Activated naive CD4-positive, alpha-beta T cell treated with anti-CD3 and anti-CD28 coated beads for 36 hours (primary cell): ENCODE measurements at regions of chr4 and their contacts with region 1.

Region 1: DNA sequence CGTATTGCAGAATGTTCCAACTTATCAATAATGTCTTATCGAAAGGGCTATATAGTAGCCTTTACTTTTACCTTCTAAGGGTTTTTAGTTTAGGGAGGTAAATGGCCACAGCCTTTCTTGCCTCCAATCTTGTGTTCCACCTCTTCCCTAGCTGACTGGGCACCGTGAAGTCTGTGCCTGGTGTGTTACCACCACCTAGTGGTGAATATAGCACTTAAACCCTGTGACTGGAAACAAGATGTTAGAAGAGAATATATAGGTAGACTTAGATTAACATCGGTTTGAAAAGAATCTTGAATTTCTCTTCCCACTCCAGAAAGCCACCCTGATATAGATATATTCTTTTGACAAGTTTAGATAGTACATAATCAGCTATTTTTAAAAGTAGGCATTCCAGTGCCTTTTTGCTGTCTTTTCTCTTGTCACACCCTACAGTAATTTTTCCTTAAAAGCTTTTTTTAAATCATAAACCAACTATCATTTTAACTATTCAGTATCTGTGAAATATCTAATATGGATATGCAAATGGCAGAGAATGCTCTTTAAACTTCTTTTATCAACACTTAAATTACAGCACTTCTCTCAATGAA is 27.8 kb upstream of the ADH7 start:
- DNase-seq: peak; percentile 70
- H3K4me3 Mint-ChIP-seq: no peak overlapping the region
- H3K27ac Mint-ChIP-seq: no peak overlapping the region
- H3K4me1 Mint-ChIP-seq: no peaks in the 10 kb centered on the region
- H3K27me3 Mint-ChIP-seq: peaks cover 6% of the 10 kb centered on the region

Region 2: DNA sequence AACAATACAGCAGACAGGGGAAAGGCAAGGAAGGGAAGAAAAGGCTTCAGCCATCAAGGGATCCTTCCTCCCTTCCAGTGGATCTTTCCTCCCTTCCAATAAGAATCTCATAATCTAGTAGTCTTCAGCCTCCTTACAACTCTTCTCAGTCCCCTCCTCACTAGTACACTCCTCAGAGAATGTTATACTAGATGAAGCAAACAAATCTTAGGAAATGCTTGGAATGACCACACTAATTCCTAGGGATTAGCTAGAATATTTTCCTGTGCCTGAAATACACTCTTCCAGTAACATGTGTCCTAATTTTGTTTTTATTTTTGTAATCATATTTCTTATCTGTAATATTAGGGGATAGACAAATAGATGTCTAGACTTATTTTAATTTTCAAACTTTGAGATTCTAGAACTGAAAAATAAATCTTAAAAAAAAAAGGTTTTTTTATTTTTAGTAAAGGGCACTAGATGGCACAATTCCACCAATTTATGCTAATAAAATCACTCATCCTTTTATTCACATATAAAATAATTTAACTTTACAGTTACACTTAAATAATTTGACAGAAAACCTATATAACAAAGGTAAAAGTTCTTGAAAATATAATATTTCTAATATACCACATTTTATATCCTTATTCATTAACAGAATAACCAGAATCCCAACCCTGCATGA is 1312.7 kb before region 1 on chr4:
- CTCF ChIA-PET with region 1: no interaction called
- intact Hi-C with region 1: loop called (anchors 5 kb)
- DNase-seq: no peak
- H3K4me3 Mint-ChIP-seq: no peak overlapping the region
- H3K27ac Mint-ChIP-seq: no peak overlapping the region
- H3K4me1 Mint-ChIP-seq: peaks cover 5% of the 10 kb centered on the region
- H3K27me3 Mint-ChIP-seq: peaks cover 6% of the 10 kb centered on the region

Region 3: DNA sequence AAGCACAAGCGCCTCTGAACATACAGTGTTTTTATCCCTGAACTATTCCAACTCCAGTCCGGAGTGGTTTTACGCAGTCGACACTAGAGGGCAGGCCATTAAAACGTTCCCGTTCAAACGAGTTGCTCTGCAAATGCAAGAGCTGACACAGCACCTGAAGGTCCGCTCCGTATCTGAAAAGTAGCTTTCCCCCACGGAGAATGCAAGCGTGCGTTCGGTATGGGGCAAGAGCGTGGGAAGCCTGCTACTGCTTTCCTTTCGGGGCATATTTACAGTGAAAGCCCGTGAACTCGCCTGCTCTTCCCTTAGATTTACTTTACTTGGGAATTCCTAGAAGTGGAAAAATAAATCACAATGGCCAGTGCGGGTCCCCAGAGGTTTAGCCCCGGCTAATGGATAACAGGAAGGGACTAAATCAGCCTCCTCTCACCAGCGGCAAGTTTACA is 995.3 kb before region 1 on chr4:
- CTCF ChIA-PET with region 1: no interaction called
- intact Hi-C with region 1: loop called (anchors 10 kb)
- DNase-seq: peak; percentile 85
- H3K4me3 Mint-ChIP-seq: peak overlapping the region; percentile 65
- H3K27ac Mint-ChIP-seq: no peak overlapping the region
- H3K4me1 Mint-ChIP-seq: peaks cover 16% of the 10 kb centered on the region
- H3K27me3 Mint-ChIP-seq: no peaks in the 10 kb centered on the region

Region 4: GRCh38 chr4:99117876-99118693 is 344.9 kb before region 1 on chr4:
- CTCF ChIA-PET with region 1: interaction called, 9 read pairs
- intact Hi-C with region 1: loop called (anchors 1 kb)
- DNase-seq: no peak
- H3K4me3 Mint-ChIP-seq: no peak overlapping the region
- H3K27ac Mint-ChIP-seq: no peak overlapping the region
- H3K4me1 Mint-ChIP-seq: no peaks in the 10 kb centered on the region
- H3K27me3 Mint-ChIP-seq: no peaks in the 10 kb centered on the region

Region 5: GRCh38 chr4:99405433-99406115 is 57.4 kb before region 1 on chr4:
- CTCF ChIA-PET with region 1: interaction called, 7 read pairs
- intact Hi-C with region 1: loop called (anchors 1 kb)
- DNase-seq: peak; percentile 77
- H3K4me3 Mint-ChIP-seq: no peak overlapping the region
- H3K27ac Mint-ChIP-seq: no peak overlapping the region
- H3K4me1 Mint-ChIP-seq: no peaks in the 10 kb centered on the region
- H3K27me3 Mint-ChIP-seq: no peaks in the 10 kb centered on the region

Region 6: GRCh38 chr4:99447079-99447478 is 15.9 kb before region 1 on chr4:
- CTCF ChIA-PET with region 1: interaction called, 10 read pairs
- intact Hi-C with region 1: no loop called
- DNase-seq: peak; percentile 36
- H3K4me3 Mint-ChIP-seq: no peak overlapping the region
- H3K27ac Mint-ChIP-seq: no peak overlapping the region
- H3K4me1 Mint-ChIP-seq: peaks cover 12% of the 10 kb centered on the region
- H3K27me3 Mint-ChIP-seq: peaks cover 2% of the 10 kb centered on the region